Colonic mucosa (tissue), 4 donors: ENCODE measurements at regions of chr2 and their contacts with region 1.

Region 1: DNA sequence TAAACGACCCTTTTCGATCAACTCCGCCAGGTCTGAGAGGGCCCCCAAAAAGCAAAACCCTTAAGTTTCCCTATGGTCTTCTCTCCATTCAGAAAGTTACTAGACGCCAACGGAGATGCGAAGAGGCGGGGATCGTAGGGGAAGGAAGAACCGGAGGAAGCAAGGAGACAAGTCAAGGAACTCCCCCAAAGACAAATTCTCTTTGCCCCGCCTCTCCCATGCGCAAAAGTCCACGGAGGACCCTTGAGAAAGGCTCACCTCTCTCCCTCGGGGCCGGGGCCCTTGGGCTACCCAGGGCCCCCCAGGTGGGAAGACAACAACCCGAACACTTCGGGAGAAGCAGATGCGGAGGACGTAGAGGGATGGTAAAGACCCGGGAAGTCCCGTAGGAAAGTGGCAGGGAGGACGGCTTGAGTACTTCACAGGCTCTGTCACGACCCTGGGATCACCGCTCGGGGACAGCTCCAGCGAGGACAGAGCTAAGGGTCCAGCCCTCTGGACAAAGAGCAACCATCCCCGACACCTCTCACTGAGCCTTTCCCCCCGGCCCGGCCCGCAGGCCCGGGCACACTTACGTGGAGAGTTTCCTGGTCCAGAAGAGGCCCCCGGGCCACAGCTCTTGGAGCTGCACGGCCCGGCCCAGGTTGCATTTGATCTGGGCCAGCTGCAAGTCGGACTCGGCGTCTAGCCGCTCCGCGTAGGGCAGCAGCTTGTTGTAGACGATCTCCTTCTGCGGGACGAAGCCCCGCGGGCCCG is 647 bp downstream of the PSME4 start:
- DNase-seq: peak; percentile 60
- H3K4me3 ChIP-seq: peak overlapping the region; percentile 70
- H3K27ac ChIP-seq: peak overlapping the region; percentile 90
- H3K4me1 ChIP-seq: peaks cover 6% of the 10 kb centered on the region
- H3K27me3 ChIP-seq: no peaks in the 10 kb centered on the region
- CTCF ChIP-seq: no peak

Region 2: DNA sequence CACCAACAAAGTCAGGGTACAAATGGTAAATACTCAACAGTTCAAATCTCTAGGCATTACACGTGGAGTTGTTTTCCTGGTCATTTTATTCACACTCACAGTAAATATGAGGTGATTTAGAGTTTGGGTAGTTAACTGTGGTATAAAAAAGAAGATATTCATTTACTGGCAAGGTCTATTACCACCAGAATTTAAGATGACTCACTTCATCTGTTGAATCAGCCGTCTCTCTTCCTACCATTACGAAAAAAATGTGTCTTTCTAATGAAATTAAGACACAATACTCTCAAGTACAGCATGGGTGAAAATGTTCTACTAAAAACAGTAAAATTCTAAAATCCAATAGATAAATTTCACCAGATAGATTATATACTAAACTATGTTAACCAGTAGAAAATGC is 89.4 kb before region 1 on chr2:
- intact Hi-C with region 1: no loop called
- DNase-seq: no peak
- H3K4me3 ChIP-seq: no peak overlapping the region
- H3K27ac ChIP-seq: no peak overlapping the region
- H3K4me1 ChIP-seq: no peaks in the 10 kb centered on the region
- H3K27me3 ChIP-seq: no peaks in the 10 kb centered on the region
- CTCF ChIP-seq: no peak

Region 3: DNA sequence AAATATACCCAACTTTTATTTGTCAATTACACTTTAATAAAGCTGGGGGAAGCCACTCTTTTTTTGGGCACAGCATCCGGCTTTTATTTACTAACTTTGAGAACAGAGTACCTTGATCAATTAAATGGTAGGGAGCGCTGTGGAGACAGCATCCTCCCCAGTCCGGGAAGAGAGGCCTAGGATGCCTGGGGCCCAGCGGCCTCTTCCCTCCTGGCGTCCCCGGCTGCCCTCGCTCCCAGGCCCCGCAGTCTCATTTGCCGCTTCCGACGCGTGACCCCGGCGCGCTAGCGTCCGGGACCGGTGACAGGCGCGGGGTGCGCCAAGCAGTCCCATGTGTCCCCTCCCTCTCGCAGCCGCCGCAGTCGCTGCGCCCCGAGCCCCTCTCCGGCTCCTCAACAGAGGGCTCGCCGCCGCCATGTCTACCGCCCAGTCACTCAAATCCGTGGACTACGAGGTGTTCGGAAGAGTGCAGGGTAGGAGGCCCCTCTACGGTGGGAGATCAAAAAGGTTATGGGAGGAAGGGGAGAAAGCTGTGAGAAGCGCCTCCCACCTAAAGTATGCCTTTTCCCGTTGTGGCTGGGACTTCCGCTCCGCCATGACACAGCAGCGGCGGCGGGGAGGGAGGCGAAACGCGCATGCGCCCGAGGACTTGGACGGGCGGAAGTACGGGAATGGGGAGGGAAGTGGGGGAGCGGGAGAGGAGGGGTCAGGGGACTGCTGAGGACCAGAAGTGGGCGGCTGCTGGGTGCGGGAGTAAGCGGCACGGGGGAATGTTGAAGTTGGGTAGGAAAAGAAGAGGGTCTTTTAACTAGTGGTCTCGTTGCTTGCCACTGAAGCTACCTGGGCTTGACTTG is 145.4 kb after region 1 on chr2 and contains the start of gene ACYP2:
- intact Hi-C with region 1: loop called (anchors 10 kb)
- DNase-seq: peak; percentile 94
- H3K4me3 ChIP-seq: peak within 1 kb of the TSS; percentile 74
- H3K27ac ChIP-seq: peak within 1 kb of the TSS; percentile 98
- H3K4me1 ChIP-seq: no peaks in the 10 kb centered on the region
- H3K27me3 ChIP-seq: no peaks in the 10 kb centered on the region
- CTCF ChIP-seq: no peak
- total RNA-seq, gene ACYP2: 13.6 to 14.1 TPM

Region 4: DNA sequence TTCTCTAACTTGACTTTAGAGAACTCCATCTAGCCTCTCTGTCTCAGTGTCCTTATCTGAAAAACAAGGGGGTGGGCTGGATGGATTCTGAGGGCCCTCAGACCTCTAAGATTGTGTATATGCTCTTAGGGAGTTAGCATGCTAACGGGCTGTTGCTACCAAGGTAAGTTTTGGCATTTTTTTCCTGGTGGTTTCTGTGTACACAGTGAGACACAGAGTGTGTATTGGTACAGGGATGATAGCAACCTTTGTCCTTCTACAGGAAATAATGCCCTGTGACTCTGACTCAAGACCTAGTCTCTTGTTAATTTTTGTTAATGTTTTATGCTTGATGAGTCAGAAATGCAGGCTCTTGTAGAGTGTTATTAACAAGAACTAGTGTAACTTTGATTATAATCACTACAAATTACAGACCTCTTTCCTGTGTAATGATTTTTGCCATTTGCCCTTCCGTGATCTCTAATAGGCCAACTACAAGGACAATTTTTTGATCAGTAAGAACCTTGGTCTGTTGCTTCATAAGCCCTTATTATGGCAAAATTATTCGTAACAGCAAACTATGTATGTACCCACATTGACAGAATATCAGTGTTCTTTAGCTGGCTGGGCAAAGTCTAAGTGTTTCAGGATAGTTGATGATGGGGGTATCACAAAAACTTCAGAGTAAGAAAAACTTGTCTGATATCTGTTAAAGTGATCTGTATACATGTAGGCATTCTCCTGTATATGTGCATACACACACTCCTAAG is 575.7 kb after region 1 on chr2:
- intact Hi-C with region 1: no loop called
- DNase-seq: no peak
- H3K4me3 ChIP-seq: no peak overlapping the region
- H3K27ac ChIP-seq: peak overlapping the region; percentile 80
- H3K4me1 ChIP-seq: peaks cover 13% of the 10 kb centered on the region
- H3K27me3 ChIP-seq: no peaks in the 10 kb centered on the region
- CTCF ChIP-seq: no peak